ENCODE measurements at regions of chr10 and their contacts with region 1.

Region 1: GRCh38 chr10:28663576-28664313 is 13.6 kb upstream of the BAMBI start:
- DNase-seq: peak; percentile 74 to 82 (median 82)
- ATAC-seq: peak; percentile 98 to 99 (median 98)
- H3K4me3 ChIP-seq: no peak overlapping the region
- H3K27ac ChIP-seq: no peak overlapping the region
- H3K4me1 ChIP-seq: peaks cover 0 to 6% (median 0%) of the 10 kb centered on the region in 4 donors
- H3K27me3 ChIP-seq: peaks cover 0 to 9% of the 10 kb centered on the region in 2 donors
- CTCF ChIP-seq: peak; percentile 92 to 99 (median 98)
- POLR2A ChIP-seq: no peak

Region 2: GRCh38 chr10:28991326-28992270 is 327.9 kb after region 1 on chr10:
- intact Hi-C with region 1: loop called (anchors 5 to 10 kb)
- DNase-seq: peak in 2 of 3 donors; percentile 27 to 62
- ATAC-seq: peak; percentile 85 to 94 (median 90)
- H3K4me3 ChIP-seq: no peak overlapping the region
- H3K27ac ChIP-seq: no peak overlapping the region
- H3K4me1 ChIP-seq: no peaks in the 10 kb centered on the region
- H3K27me3 ChIP-seq: no peaks in the 10 kb centered on the region
- CTCF ChIP-seq: peak; percentile 63 to 85 (median 78)
- POLR2A ChIP-seq: no peak

Region 3: DNA sequence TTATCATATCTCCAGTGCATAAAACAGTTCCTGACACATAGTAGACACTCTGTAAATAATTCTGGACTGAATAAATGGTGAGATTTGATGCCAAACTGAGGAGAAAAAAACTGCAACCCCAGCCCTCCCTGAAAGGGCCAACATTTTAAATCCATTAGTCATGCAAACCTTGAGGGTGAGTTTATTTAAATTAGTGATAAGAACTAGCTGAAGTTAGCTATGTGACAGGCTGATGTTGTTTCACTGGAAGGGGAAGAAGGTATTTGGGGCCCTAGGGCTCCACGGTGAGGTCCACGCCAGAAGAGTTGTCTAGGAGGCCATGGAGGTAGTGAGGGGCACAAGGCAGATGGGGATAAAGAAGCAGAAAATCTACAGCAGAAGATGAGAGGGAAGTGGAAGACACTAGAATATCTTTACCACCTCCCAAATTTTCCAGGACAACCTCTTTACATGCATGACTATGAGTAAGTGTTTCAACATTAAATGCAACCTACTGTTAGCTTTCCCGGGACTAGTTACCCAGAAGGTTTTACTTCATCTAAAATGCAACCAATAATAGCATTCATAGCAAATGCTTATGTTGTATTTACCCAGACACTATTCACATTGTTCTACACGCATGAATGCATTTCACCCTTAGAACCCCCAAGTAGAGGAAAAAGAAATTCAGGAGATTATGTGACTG is 441.9 kb after region 1 on chr10:
- intact Hi-C with region 1: loop called in 1 of 2 experiments (anchors 10 kb)
- DNase-seq: no peak
- ATAC-seq: peak in 1 of 4 donors; percentile 62
- H3K4me3 ChIP-seq: no peak overlapping the region
- H3K27ac ChIP-seq: peak overlapping the region in 2 of 3 donors; percentile 45 to 72
- H3K4me1 ChIP-seq: peaks cover 0 to 20% (median 5%) of the 10 kb centered on the region in 4 donors
- H3K27me3 ChIP-seq: no peaks in the 10 kb centered on the region
- CTCF ChIP-seq: no peak
- POLR2A ChIP-seq: no peak

Region 4: GRCh38 chr10:29120237-29120636 is 456.5 kb after region 1 on chr10:
- intact Hi-C with region 1: loop called in 1 of 2 experiments (anchors 10 kb)
- DNase-seq: no peak
- ATAC-seq: peak in 1 of 4 donors; percentile 28
- H3K4me3 ChIP-seq: no peak overlapping the region
- H3K27ac ChIP-seq: no peak overlapping the region
- H3K4me1 ChIP-seq: no peaks in the 10 kb centered on the region
- H3K27me3 ChIP-seq: no peaks in the 10 kb centered on the region
- CTCF ChIP-seq: no peak
- POLR2A ChIP-seq: no peak

Measured in right lobe of liver (tissue), 6 donors.